ENCODE measurements at regions of chr11 and their contacts with region 1.

Region 1: GRCh38 chr11:94128746-94129511 is at the start of gene PANX1:
- DNase-seq: peak; percentile 69
- ATAC-seq: peak; percentile 85
- H3K4me3 Mint-ChIP-seq: no peak within 1 kb of the TSS
- H3K27ac Mint-ChIP-seq: peak within 1 kb of the TSS; percentile 93
- H3K4me1 Mint-ChIP-seq: peaks cover 27% of the 10 kb centered on the region
- H3K27me3 Mint-ChIP-seq: no peaks in the 10 kb centered on the region
- CTCF ChIP-seq: no peak
- total RNA-seq, gene PANX1: 9.2 and 11.2 TPM in 2 replicates

Region 2: DNA sequence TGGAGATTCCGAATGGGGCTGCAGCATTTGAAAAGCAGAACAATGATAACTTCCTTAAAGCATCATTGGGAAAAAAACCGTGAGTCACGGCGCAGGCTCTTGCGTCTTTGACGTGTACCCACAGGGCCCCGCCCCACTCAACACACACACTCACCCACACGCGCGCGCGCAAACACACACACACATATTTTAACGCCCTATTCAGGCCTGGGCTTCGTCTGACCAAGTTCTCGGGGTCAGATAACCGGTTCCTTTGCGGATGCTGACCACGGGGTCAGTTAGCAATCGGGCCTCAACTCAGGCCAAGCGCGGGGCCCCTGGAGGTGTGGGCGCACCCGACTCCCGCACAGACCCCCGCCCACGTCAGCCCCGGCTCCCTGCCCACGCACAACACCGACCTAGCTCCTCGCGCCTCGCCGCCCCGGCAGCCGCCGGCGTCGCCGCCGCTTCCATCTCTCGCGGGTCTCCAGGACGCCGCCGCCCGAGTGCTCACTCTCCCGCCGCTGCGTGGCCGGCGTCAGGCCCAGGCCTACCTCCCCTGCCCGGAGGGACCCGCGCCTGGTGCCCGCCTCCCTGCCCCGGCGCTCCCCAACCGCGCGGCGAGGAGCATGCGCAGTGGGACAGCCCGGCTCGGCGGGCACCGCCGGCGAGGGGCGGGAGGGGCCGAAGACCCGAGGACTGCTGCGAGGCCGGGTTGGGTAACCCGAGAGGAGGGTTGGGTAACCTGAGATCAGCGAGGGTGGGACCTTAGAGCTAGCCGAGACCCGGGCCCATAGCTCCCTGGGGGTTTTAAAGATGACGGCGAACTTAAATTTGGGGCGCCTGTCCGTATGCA is 931.3 kb before region 1 on chr11 and contains the start of gene SLC36A4:
- CTCF ChIA-PET with region 1: no interaction called
- POLR2A ChIA-PET with region 1: no interaction called
- intact Hi-C with region 1: loop called (anchors 2 kb)
- DNase-seq: peak; percentile 85
- ATAC-seq: peak; percentile 86
- H3K4me3 Mint-ChIP-seq: peak within 1 kb of the TSS; percentile 91
- H3K27ac Mint-ChIP-seq: peak within 1 kb of the TSS; percentile 93
- H3K4me1 Mint-ChIP-seq: peaks cover 15% of the 10 kb centered on the region
- H3K27me3 Mint-ChIP-seq: no peaks in the 10 kb centered on the region
- CTCF ChIP-seq: no peak
- total RNA-seq, gene SLC36A4: 14.9 and 17.0 TPM in 2 replicates

Region 3: DNA sequence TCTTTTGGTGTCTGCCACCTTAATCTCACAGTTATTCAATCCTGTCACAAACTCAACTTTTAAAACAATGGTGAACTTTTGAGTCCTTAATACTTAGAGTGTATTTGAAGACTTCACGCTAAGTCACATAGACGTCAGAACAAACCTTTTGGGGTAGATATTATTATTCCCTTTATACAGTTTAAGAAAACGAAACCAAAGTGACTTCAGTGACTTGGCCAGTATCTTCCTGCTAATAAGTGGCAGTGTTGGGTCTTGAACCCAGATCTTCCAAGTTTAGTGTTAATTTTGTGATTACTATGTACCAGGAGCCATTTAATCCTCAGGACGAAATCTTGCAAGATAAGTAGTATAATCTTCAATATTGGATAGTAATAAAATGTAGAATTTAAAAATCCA is 466.8 kb before region 1 on chr11:
- CTCF ChIA-PET with region 1: no interaction called
- POLR2A ChIA-PET with region 1: interaction called, 9 read pairs
- intact Hi-C with region 1: loop called (anchors 2 kb)
- DNase-seq: no peak
- ATAC-seq: no peak
- H3K4me3 Mint-ChIP-seq: peak overlapping the region; percentile 84
- H3K27ac Mint-ChIP-seq: peak overlapping the region; percentile 85
- H3K4me1 Mint-ChIP-seq: peaks cover 23% of the 10 kb centered on the region
- H3K27me3 Mint-ChIP-seq: no peaks in the 10 kb centered on the region
- CTCF ChIP-seq: no peak

Region 4: GRCh38 chr11:94151903-94152677 is 23.2 kb after region 1 on chr11:
- CTCF ChIA-PET with region 1: no interaction called
- POLR2A ChIA-PET with region 1: interaction called, 3 read pairs
- intact Hi-C with region 1: loop called (anchors 1 kb)
- DNase-seq: no peak
- ATAC-seq: peak; percentile 89
- H3K4me3 Mint-ChIP-seq: no peak overlapping the region
- H3K27ac Mint-ChIP-seq: peak overlapping the region; percentile 57
- H3K4me1 Mint-ChIP-seq: peaks cover 71% of the 10 kb centered on the region
- H3K27me3 Mint-ChIP-seq: no peaks in the 10 kb centered on the region
- CTCF ChIP-seq: no peak

Region 5: DNA sequence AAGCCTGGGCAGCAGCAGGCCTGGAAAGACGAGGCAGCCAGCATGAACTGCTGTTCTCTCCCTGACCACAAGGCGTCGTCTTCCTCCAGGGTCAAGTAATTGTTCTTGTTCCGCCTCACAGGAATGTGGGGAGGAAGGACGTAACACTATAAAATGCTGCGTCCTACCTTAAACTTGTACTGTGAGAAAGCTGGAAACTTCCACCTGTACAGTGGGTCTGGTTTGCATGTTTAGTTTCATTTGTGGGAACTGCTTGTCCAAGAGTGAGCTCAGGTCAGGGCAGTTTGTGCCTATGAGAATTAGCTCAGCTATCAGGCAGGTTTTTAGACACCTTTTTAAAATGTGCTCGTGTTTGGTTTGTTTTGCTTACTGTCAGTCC is 54.9 kb after region 1 on chr11:
- CTCF ChIA-PET with region 1: interaction called, 6 read pairs
- POLR2A ChIA-PET with region 1: interaction called, 5 read pairs
- intact Hi-C with region 1: loop called (anchors 5 kb)
- DNase-seq: peak; percentile 22
- ATAC-seq: peak; percentile 62
- H3K4me3 Mint-ChIP-seq: no peak overlapping the region
- H3K27ac Mint-ChIP-seq: no peak overlapping the region
- H3K4me1 Mint-ChIP-seq: peaks cover 24% of the 10 kb centered on the region
- H3K27me3 Mint-ChIP-seq: no peaks in the 10 kb centered on the region
- CTCF ChIP-seq: no peak

Region 6: GRCh38 chr11:94224078-94224477 is 95.1 kb after region 1 on chr11:
- CTCF ChIA-PET with region 1: no interaction called
- POLR2A ChIA-PET with region 1: no interaction called
- intact Hi-C with region 1: no loop called
- DNase-seq: no peak
- ATAC-seq: no peak
- H3K4me3 Mint-ChIP-seq: no peak overlapping the region
- H3K27ac Mint-ChIP-seq: no peak overlapping the region
- H3K4me1 Mint-ChIP-seq: no peaks in the 10 kb centered on the region
- H3K27me3 Mint-ChIP-seq: peaks cover 3% of the 10 kb centered on the region
- CTCF ChIP-seq: no peak

Region 7: GRCh38 chr11:94493281-94494125 is 364.6 kb after region 1 on chr11 and contains the starts of genes ANKRD49 and MRE11:
- CTCF ChIA-PET with region 1: no interaction called
- POLR2A ChIA-PET with region 1: interaction called, 8 read pairs
- intact Hi-C with region 1: loop called (anchors 2 kb)
- DNase-seq: peak; percentile 94
- ATAC-seq: peak; percentile 99
- H3K4me3 Mint-ChIP-seq: peak within 1 kb of the TSS; percentile 93
- H3K27ac Mint-ChIP-seq: peak within 1 kb of the TSS; percentile 92
- H3K4me1 Mint-ChIP-seq: peaks cover 39% of the 10 kb centered on the region
- H3K27me3 Mint-ChIP-seq: no peaks in the 10 kb centered on the region
- CTCF ChIP-seq: no peak
- total RNA-seq, gene ANKRD49: 39.5 and 46.5 TPM in 2 replicates
- total RNA-seq, gene MRE11: 39.7 and 40.1 TPM in 2 replicates